CD4-positive, alpha-beta T cell (primary cell): ENCODE measurements at regions of chr17 and their contacts with region 1.

Region 1: GRCh38 chr17:64506576-64507477 is at the start of gene CEP95:
- DNase-seq: peak; percentile 89 to 98 (median 94)
- ATAC-seq: peak; percentile 44
- H3K4me3 ChIP-seq: peak within 1 kb of the TSS; percentile 90
- H3K4me3 Mint-ChIP-seq: peak within 1 kb of the TSS; percentile 99
- H3K27ac ChIP-seq: peak within 1 kb of the TSS; percentile 99 to 100
- H3K27ac Mint-ChIP-seq: peak within 1 kb of the TSS; percentile 99
- H3K4me1 ChIP-seq: peaks cover 28% of the 10 kb centered on the region
- H3K4me1 Mint-ChIP-seq: peaks cover 61% of the 10 kb centered on the region
- H3K27me3 ChIP-seq: no peaks in the 10 kb centered on the region
- H3K27me3 Mint-ChIP-seq: no peaks in the 10 kb centered on the region
- CTCF ChIP-seq: no peak
- total RNA-seq, gene CEP95: 256 to 269 TPM

Region 2: GRCh38 chr17:63621766-63622519 is 884.9 kb before region 1 on chr17 and contains the start of gene MAP3K3:
- CTCF ChIA-PET with region 1: no interaction called
- POLR2A ChIA-PET with region 1: interaction called, 10 read pairs
- intact Hi-C with region 1: loop called in 1 of 2 experiments (anchors 5 kb)
- DNase-seq: peak; percentile 91 to 100 (median 95)
- ATAC-seq: peak; percentile 90
- H3K4me3 ChIP-seq: peak within 1 kb of the TSS; percentile 72
- H3K4me3 Mint-ChIP-seq: peak within 1 kb of the TSS; percentile 99
- H3K27ac ChIP-seq: peak within 1 kb of the TSS; percentile 51 to 69
- H3K27ac Mint-ChIP-seq: peak within 1 kb of the TSS; percentile 88
- H3K4me1 ChIP-seq: peaks cover 25% of the 10 kb centered on the region
- H3K4me1 Mint-ChIP-seq: peaks cover 44% of the 10 kb centered on the region
- H3K27me3 ChIP-seq: no peaks in the 10 kb centered on the region
- H3K27me3 Mint-ChIP-seq: no peaks in the 10 kb centered on the region
- CTCF ChIP-seq: no peak
- total RNA-seq, gene MAP3K3: 75.8 to 78.1 TPM

Region 3: GRCh38 chr17:63842540-63843386 is 664.1 kb before region 1 on chr17 and contains the start of gene SMARCD2:
- CTCF ChIA-PET with region 1: no interaction called
- POLR2A ChIA-PET with region 1: interaction called, 8 read pairs
- intact Hi-C with region 1: loop called in 1 of 2 experiments (anchors 5 kb)
- DNase-seq: peak; percentile 98 to 100 (median 99)
- ATAC-seq: peak; percentile 88
- H3K4me3 ChIP-seq: peak within 1 kb of the TSS; percentile 85
- H3K4me3 Mint-ChIP-seq: peak within 1 kb of the TSS; percentile 94
- H3K27ac ChIP-seq: peak within 1 kb of the TSS; percentile 85 to 93
- H3K27ac Mint-ChIP-seq: peak within 1 kb of the TSS; percentile 91
- H3K4me1 ChIP-seq: peaks cover 57% of the 10 kb centered on the region
- H3K4me1 Mint-ChIP-seq: peaks cover 50% of the 10 kb centered on the region
- H3K27me3 ChIP-seq: no peaks in the 10 kb centered on the region
- H3K27me3 Mint-ChIP-seq: no peaks in the 10 kb centered on the region
- CTCF ChIP-seq: no peak
- total RNA-seq, gene SMARCD2: 102 to 111 TPM

Region 4: DNA sequence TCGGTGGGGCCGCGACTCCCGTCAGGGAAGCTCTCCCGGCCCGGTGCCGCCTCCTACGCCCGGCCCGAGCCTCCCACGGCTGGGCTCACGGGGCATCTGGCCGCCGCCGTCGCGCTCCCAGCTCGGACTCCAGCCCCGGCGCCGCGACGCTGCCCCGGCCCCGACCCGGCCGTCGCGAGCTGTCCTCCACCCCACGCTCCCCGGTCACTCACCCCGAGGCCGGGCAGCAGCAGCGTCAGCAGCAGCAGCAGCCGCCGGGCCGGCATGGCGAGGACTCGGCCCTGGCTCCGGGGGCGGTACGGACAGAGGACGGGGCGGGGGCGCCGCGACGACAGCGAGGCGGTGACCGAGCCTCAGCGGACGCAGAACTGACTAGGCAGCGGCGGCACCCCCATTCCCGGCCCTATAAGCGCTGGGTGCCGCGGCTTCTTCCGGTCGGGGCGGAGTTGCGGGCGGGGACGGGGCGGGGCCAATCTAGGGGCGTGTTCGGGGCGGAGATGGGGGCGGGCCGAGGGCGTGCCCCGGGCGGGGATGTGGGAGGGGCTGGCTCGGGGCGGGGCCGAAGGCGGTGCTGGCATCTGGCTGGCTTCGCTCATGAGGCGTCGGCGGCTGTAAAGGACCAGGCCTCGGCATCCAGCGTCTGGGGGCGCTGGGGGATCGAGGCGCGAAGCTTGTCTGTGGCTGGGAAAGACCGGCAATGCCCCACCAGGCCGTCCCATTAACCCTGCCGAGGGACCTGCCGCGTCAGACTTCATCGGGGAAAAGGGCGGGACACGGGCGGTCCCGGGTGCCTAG is 376.9 kb before region 1 on chr17 and contains the start of gene ERN1:
- CTCF ChIA-PET with region 1: no interaction called
- POLR2A ChIA-PET with region 1: interaction called, 10 read pairs
- intact Hi-C with region 1: no loop called
- DNase-seq: peak; percentile 85 to 95 (median 91)
- ATAC-seq: peak; percentile 86
- H3K4me3 ChIP-seq: peak within 1 kb of the TSS; percentile 89
- H3K4me3 Mint-ChIP-seq: peak within 1 kb of the TSS; percentile 99
- H3K27ac ChIP-seq: peak within 1 kb of the TSS; percentile 88 to 96
- H3K27ac Mint-ChIP-seq: peak within 1 kb of the TSS; percentile 92
- H3K4me1 ChIP-seq: peaks cover 36% of the 10 kb centered on the region
- H3K4me1 Mint-ChIP-seq: peaks cover 57% of the 10 kb centered on the region
- H3K27me3 ChIP-seq: no peaks in the 10 kb centered on the region
- H3K27me3 Mint-ChIP-seq: no peaks in the 10 kb centered on the region
- CTCF ChIP-seq: no peak
- total RNA-seq, gene ERN1: 62.7 to 67.8 TPM

Region 5: GRCh38 chr17:64393000-64393402 is 113.8 kb before region 1 on chr17:
- CTCF ChIA-PET with region 1: no interaction called
- POLR2A ChIA-PET with region 1: interaction called, 46 read pairs
- intact Hi-C with region 1: no loop called
- DNase-seq: peak in 7 of 14 experiments; percentile 20 to 51 (median 43)
- ATAC-seq: peak; percentile 73
- H3K4me3 ChIP-seq: peak overlapping the region; percentile 36
- H3K4me3 Mint-ChIP-seq: peak overlapping the region; percentile 72
- H3K27ac ChIP-seq: peak overlapping the region in 1 of 2 donors; percentile 38
- H3K27ac Mint-ChIP-seq: peak overlapping the region; percentile 91
- H3K4me1 ChIP-seq: peaks cover 35% of the 10 kb centered on the region
- H3K4me1 Mint-ChIP-seq: peaks cover 63% of the 10 kb centered on the region
- H3K27me3 ChIP-seq: no peaks in the 10 kb centered on the region
- H3K27me3 Mint-ChIP-seq: no peaks in the 10 kb centered on the region
- CTCF ChIP-seq: no peak

Region 6: DNA sequence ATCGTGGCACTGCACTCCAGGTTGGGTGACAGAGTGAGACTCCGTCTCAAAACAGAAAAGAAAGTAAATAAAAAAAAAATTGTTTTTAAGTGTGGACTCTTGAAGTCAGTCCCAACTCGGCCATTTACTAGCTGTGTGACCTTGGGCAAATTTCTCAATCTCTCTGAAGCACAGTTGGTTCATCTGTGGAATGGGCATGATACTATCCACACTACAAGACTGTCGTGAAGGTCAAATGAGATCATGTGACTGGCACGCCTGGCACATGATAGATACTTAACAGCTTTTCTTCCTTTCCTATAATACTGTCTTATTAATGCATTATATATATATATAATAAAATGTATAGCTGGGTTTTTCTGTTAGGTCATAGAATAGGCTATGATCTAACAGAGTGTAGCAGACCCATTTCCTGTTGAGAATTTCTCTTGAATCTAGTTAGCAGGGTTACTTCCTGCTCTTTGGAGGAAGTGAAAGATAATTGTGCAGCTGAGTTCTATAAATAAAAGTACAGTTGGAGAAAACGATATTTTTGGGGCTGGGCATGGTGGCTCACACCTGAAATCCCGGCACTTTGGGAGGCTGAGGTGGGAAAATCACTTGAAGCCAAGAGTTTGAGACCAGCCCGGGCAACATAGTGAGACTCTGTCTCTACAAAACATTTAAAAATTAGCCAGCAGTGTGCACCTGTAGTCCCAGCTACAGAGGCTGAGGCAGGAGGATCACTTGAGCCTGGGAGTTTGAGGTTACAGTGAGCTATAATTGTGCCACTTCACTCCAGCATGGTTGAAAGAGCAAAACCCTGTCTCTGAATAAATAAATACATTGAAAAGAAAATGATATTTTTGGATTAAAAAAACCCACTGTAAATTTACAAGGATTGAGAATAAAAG is 50.6 kb before region 1 on chr17:
- CTCF ChIA-PET with region 1: no interaction called
- POLR2A ChIA-PET with region 1: interaction called, 46 read pairs
- intact Hi-C with region 1: no loop called
- DNase-seq: peak in 3 of 14 experiments; percentile 27 to 67 (median 32)
- ATAC-seq: peak; percentile 59
- H3K4me3 ChIP-seq: no peak overlapping the region
- H3K4me3 Mint-ChIP-seq: peak overlapping the region; percentile 9
- H3K27ac ChIP-seq: peak overlapping the region in 1 of 2 donors; percentile 37
- H3K27ac Mint-ChIP-seq: peak overlapping the region; percentile 74
- H3K4me1 ChIP-seq: peaks cover 24% of the 10 kb centered on the region
- H3K4me1 Mint-ChIP-seq: peaks cover 31% of the 10 kb centered on the region
- H3K27me3 ChIP-seq: no peaks in the 10 kb centered on the region
- H3K27me3 Mint-ChIP-seq: no peaks in the 10 kb centered on the region
- CTCF ChIP-seq: no peak

Region 7: DNA sequence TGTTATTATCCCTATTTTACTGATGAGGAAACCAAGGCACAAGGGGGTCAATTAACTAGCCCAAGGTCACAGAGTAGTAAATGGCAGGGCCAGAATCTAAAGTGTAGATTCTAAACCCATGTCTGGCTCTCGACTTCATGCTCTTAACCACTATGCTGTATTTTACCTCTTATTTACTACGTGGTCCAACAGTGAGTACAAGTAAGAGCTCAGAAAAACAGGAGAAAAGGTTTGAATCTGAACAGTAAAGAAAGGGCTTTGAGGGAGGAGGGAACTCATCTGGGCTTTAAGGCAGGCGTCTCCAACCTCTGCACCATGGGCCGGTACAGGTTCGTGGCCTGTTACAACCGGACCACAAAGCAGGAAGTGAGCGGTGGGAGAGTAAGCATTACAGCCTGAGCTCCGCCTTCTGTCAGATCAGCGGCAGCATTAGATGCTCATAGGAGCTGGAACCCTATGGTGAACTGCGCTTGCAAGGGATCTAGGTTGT is 92.4 kb after region 1 on chr17:
- CTCF ChIA-PET with region 1: no interaction called
- POLR2A ChIA-PET with region 1: interaction called, 18 read pairs
- intact Hi-C with region 1: no loop called
- DNase-seq: peak; percentile 15 to 74 (median 44)
- ATAC-seq: peak; percentile 97
- H3K4me3 ChIP-seq: no peak overlapping the region
- H3K4me3 Mint-ChIP-seq: peak overlapping the region; percentile 76
- H3K27ac ChIP-seq: peak overlapping the region in 1 of 2 donors; percentile 31
- H3K27ac Mint-ChIP-seq: peak overlapping the region; percentile 90
- H3K4me1 ChIP-seq: peaks cover 10% of the 10 kb centered on the region
- H3K4me1 Mint-ChIP-seq: peaks cover 45% of the 10 kb centered on the region
- H3K27me3 ChIP-seq: no peaks in the 10 kb centered on the region
- H3K27me3 Mint-ChIP-seq: no peaks in the 10 kb centered on the region
- CTCF ChIP-seq: no peak